ENCODE measurements at regions of chr3 and their contacts with region 1.

Region 1: GRCh38 chr3:158097593-158098308 is 8.5 kb downstream of the SHOX2 start:
- DNase-seq: peak; percentile 52
- H3K4me3 ChIP-seq: peak overlapping the region in 1 of 3 experiments; percentile 26
- H3K27ac ChIP-seq: no peak overlapping the region
- H3K4me1 ChIP-seq: peaks cover 6% of the 10 kb centered on the region
- H3K27me3 ChIP-seq: peaks cover 85 to 98% of the 10 kb centered on the region in 2 experiments
- CTCF ChIP-seq: no peak
- POLR2A ChIP-seq: no peak

Region 2: GRCh38 chr3:158109804-158110657 is 12.3 kb after region 1 on chr3 and contains the start of gene RSRC1:
- CTCF ChIA-PET with region 1: interaction called, 4 read pairs
- POLR2A ChIA-PET with region 1: interaction called, 3 read pairs
- dilution Hi-C with region 1: no loop called
- intact Hi-C with region 1: loop called (anchors 1 kb)
- DNase-seq: peak; percentile 89
- H3K4me3 ChIP-seq: peak within 1 kb of the TSS; percentile 75 to 95 (median 83)
- H3K27ac ChIP-seq: peak within 1 kb of the TSS; percentile 9
- H3K4me1 ChIP-seq: peaks cover 12% of the 10 kb centered on the region
- H3K27me3 ChIP-seq: peaks cover 23 to 46% of the 10 kb centered on the region in 2 experiments
- CTCF ChIP-seq: no peak
- POLR2A ChIP-seq: peak; percentile 74
- total RNA-seq, gene RSRC1: 24.8 and 25.4 TPM in 2 replicates

Region 3: GRCh38 chr3:158539414-158540014 is 441.8 kb after region 1 on chr3:
- CTCF ChIA-PET with region 1: no interaction called
- POLR2A ChIA-PET with region 1: no interaction called
- dilution Hi-C with region 1: no loop called
- intact Hi-C with region 1: loop called (anchors 5 kb)
- DNase-seq: peak; percentile 70
- H3K4me3 ChIP-seq: no peak overlapping the region
- H3K27ac ChIP-seq: no peak overlapping the region
- H3K4me1 ChIP-seq: no peaks in the 10 kb centered on the region
- H3K27me3 ChIP-seq: no peaks in the 10 kb centered on the region
- CTCF ChIP-seq: peak; percentile 37 to 41
- POLR2A ChIP-seq: no peak